Activated naive CD4-positive, alpha-beta T cell treated with anti-CD3 and anti-CD28 coated beads for 36 hours (primary cell): ENCODE measurements at regions of chr22 and their contacts with region 1.

Region 1: DNA sequence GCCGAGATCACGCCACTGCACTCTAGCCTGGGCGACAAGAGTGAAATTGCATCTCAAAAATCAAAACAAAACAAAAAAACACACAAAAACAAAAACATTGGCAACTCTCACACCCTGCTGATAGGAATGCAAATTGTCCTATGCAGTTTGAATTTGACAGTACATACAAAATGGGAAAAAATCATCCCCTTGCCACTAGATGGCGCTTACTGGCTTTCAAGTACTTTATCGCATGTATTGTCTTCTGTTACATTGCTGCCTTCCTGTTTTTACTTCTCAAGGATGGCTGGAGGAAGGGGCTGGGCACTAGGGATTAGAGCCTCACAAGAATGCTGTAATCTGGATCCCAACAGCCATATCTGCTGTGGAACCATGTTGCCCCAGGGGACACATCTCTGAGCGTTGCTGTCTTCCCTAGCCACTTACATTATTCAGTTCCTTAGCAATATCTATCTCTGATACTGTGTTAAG is 59.4 kb upstream of the A4GALT start:
- DNase-seq: peak; percentile 64
- H3K4me3 Mint-ChIP-seq: no peak overlapping the region
- H3K27ac Mint-ChIP-seq: no peak overlapping the region
- H3K4me1 Mint-ChIP-seq: no peaks in the 10 kb centered on the region
- H3K27me3 Mint-ChIP-seq: no peaks in the 10 kb centered on the region

Region 2: DNA sequence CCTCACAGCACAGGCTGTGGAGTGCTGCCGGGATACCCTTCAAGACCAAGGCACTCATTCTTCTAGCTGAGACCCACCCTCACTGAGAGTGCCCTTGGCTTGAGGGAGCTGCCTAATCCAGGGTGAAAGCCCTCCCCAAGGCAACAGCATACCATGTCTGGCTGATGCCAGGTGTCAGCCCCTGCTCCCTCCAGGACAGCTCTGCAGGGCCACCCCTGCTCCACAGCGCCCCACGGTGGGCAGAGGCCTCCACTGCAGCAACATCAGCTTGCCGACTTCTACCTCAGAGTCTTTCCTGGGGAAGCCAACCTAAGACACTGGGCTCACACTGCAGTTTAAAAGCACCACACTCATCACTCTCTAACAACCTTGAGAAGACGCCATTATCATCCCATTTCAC is 280.1 kb after region 1 on chr22:
- CTCF ChIA-PET with region 1: no interaction called
- intact Hi-C with region 1: loop called (anchors 1 kb)
- DNase-seq: peak; percentile 68
- H3K4me3 Mint-ChIP-seq: no peak overlapping the region
- H3K27ac Mint-ChIP-seq: no peak overlapping the region
- H3K4me1 Mint-ChIP-seq: no peaks in the 10 kb centered on the region
- H3K27me3 Mint-ChIP-seq: no peaks in the 10 kb centered on the region